ENCODE measurements at regions of chr6 and their contacts with region 1.

Region 1: GRCh38 chr6:116279260-116280063 is at the start of gene TSPYL1:
- DNase-seq: peak; percentile 95
- H3K27ac ChIP-seq: peak within 1 kb of the TSS; percentile 97
- CTCF ChIP-seq: no peak

Region 2: GRCh38 chr6:116248577-116248976 is 30.9 kb before region 1 on chr6:
- CTCF ChIA-PET with region 1: no interaction called
- POLR2A ChIA-PET with region 1: no interaction called
- DNase-seq: no peak
- H3K27ac ChIP-seq: no peak overlapping the region
- CTCF ChIP-seq: no peak

Region 3: DNA sequence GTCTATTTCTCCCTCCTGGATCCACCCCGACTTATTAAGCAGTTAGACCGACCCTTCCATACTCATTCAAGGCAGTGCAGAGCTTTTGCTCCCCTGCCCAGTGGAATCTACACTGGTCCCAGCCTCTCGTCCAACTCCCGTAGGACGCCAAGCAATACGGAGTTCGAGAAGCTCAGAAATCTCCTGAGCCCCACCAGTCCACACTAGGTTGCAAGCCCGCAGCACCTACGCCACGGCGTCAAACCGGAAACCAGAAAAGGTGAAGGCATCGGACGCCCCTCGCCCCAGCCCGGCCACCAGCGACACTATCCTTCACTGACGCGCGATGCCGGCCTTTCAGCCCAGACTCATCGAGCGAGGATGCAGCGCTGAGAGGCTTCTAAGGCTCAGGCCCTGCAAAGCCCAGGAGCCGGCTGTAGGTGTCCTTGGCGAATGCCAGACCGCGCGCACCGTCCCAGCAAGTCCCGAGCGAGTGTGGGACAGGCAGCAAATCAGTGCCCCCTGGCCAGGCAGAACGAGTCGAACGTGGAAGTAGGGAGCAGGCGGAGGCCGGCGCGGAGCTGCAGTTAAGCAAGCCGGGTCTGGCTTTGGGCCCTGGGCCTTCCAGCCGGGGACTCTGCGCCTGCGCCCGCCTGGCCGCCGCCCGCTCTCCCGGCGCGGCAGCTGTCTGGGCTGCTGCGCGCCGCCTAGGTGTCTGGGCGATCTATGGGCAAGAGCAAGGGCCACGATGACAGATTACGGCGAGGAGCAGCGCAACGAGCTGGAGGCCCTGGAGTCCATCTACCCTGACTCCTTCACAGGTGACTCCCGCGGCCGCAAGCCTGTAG is 291.6 kb after region 1 on chr6 and contains the start of gene RWDD1:
- CTCF ChIA-PET with region 1: interaction called, 13 read pairs
- POLR2A ChIA-PET with region 1: no interaction called
- DNase-seq: peak; percentile 97
- H3K27ac ChIP-seq: peak within 1 kb of the TSS; percentile 93
- CTCF ChIP-seq: no peak